Posterior vena cava (tissue), 2 donors: ENCODE measurements at regions of chr12 and their contacts with region 1.

Region 1: GRCh38 chr12:77925536-77926108 is 94.9 kb downstream of the NAV3 start:
- DNase-seq: peak; percentile 83

Region 2: DNA sequence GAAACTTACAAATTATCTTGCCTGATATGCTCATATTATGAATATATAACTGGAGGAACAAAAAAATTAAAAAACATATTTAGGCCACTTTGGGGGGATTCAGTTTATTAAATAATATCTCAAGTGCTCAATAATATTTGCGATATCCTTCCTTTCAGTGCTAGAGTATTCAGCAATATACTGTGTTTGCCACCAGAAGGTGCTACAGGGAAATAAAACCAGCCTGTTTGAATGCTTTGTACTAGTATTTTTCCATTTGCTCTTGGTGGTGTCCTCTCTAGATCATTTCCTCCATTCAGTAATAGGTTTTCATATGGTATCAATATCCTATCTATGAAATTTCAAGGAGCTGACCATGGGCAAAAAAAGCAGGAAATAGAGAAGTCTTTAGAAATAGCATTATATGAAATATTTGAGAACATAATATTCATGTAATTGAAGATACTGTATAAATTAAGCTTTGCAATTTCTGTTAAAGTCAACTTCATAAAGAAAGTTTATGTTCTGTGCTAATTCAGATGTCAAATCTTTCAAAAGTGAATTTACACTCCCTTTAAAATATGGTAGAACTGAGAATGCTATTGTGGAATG is 201.2 kb before region 1 on chr12:
- intact Hi-C with region 1: loop called in 1 of 2 experiments (anchors 5 kb)
- DNase-seq: no peak

Region 3: GRCh38 chr12:77734214-77734883 is 191.3 kb before region 1 on chr12:
- intact Hi-C with region 1: loop called in 1 of 2 experiments (anchors 5 kb)
- DNase-seq: no peak

Region 4: GRCh38 chr12:77973579-77973978 is 48.0 kb after region 1 on chr12:
- intact Hi-C with region 1: no loop called
- DNase-seq: no peak